ENCODE measurements at regions of chr2 and their contacts with region 1.

Region 1: GRCh38 chr2:19347619-19348562 is 10.5 kb downstream of the OSR1 start:
- DNase-seq: peak; percentile 96
- H3K4me3 Mint-ChIP-seq: peak overlapping the region; percentile 91
- H3K27ac Mint-ChIP-seq: peak overlapping the region; percentile 91
- H3K4me1 Mint-ChIP-seq: peaks cover 21% of the 10 kb centered on the region
- H3K27me3 Mint-ChIP-seq: peaks cover 38% of the 10 kb centered on the region

Region 2: GRCh38 chr2:17753803-17754663 is 1593.9 kb before region 1 on chr2 and contains the starts of genes GEN1 and SMC6:
- CTCF ChIA-PET with region 1: no interaction called
- POLR2A ChIA-PET with region 1: no interaction called
- intact Hi-C with region 1: loop called (anchors 10 kb)
- DNase-seq: peak; percentile 94
- H3K4me3 Mint-ChIP-seq: peak within 1 kb of the TSS; percentile 83
- H3K27ac Mint-ChIP-seq: peak within 1 kb of the TSS; percentile 97
- H3K4me1 Mint-ChIP-seq: peaks cover 27% of the 10 kb centered on the region
- H3K27me3 Mint-ChIP-seq: no peaks in the 10 kb centered on the region
- total RNA-seq, gene GEN1: 24.0 to 30.9 TPM
- total RNA-seq, gene SMC6: 21.4 to 22.7 TPM

Region 3: DNA sequence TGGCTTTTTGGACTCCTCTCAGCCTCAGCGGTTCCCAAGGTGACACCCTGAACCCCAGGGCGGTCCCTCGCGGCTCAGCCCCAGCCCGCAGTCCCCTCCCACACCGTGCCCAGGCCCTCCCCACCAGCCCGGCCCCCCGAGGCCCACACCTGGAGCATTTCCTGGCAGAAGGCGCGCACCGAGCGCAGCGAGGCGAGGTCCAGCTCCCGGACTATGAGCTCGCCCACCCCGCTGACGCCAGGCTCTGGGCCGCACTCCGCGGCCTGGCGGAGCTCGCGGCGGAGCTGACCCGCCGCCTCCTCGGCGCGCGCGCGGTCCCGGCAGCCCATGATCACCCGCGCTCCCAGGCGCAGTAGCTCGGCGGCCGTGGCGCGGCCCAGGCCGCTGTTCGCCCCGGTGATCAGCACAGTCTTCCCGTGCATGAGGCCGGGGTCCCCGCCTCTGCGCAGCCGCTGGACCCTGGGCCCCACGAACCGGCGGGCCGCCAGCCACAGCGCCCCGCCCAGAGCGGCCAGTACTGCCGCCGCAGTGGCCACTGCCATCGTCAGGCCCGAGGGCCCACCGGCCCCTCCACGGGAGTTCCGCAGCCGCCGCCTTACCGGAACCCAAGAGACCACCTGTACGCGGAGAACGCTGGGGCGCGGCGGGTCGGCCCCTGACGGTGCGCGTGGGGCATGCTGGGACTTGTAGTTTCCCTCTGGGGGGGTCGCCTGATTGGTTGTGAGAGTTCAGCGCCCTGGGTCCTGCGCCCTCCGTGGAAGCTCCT is 787.7 kb before region 1 on chr2 and contains the start of gene RDH14:
- CTCF ChIA-PET with region 1: no interaction called
- POLR2A ChIA-PET with region 1: interaction called, 9 read pairs
- intact Hi-C with region 1: loop called (anchors 1 kb)
- DNase-seq: peak; percentile 94
- H3K4me3 Mint-ChIP-seq: peak within 1 kb of the TSS; percentile 90
- H3K27ac Mint-ChIP-seq: peak within 1 kb of the TSS; percentile 89
- H3K4me1 Mint-ChIP-seq: peaks cover 33% of the 10 kb centered on the region
- H3K27me3 Mint-ChIP-seq: no peaks in the 10 kb centered on the region
- total RNA-seq, gene RDH14: 14.1 to 14.4 TPM

Region 4: DNA sequence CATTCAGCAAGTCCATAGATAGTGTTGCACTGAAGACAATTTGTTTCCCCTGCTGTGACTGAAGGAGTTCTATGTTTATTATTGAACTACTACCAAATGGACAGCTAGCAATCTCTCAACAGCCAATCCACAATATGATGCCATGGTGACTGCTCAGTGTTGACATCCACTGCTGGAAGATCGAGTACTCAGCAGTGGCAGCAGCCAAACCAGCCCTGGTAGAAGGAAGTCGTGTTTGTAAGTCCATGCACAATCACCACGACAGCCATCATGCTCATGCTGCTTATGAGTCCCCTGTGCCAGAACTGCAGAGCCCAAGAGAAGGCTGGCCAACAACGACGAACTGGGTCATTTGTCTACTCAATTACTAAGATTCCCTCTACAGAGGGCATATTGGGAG is 55.9 kb before region 1 on chr2:
- CTCF ChIA-PET with region 1: no interaction called
- POLR2A ChIA-PET with region 1: no interaction called
- intact Hi-C with region 1: no loop called
- DNase-seq: no peak
- H3K4me3 Mint-ChIP-seq: no peak overlapping the region
- H3K27ac Mint-ChIP-seq: no peak overlapping the region
- H3K4me1 Mint-ChIP-seq: peaks cover 6% of the 10 kb centered on the region
- H3K27me3 Mint-ChIP-seq: no peaks in the 10 kb centered on the region

Region 5: GRCh38 chr2:19362755-19363473 is 15.0 kb after region 1 on chr2:
- CTCF ChIA-PET with region 1: interaction called, 43 read pairs
- POLR2A ChIA-PET with region 1: interaction called, 11 read pairs
- intact Hi-C with region 1: loop called (anchors 1 kb)
- DNase-seq: peak; percentile 70
- H3K4me3 Mint-ChIP-seq: peak overlapping the region; percentile 83
- H3K27ac Mint-ChIP-seq: no peak overlapping the region
- H3K4me1 Mint-ChIP-seq: peaks cover 24% of the 10 kb centered on the region
- H3K27me3 Mint-ChIP-seq: peaks cover 51% of the 10 kb centered on the region

Region 6: DNA sequence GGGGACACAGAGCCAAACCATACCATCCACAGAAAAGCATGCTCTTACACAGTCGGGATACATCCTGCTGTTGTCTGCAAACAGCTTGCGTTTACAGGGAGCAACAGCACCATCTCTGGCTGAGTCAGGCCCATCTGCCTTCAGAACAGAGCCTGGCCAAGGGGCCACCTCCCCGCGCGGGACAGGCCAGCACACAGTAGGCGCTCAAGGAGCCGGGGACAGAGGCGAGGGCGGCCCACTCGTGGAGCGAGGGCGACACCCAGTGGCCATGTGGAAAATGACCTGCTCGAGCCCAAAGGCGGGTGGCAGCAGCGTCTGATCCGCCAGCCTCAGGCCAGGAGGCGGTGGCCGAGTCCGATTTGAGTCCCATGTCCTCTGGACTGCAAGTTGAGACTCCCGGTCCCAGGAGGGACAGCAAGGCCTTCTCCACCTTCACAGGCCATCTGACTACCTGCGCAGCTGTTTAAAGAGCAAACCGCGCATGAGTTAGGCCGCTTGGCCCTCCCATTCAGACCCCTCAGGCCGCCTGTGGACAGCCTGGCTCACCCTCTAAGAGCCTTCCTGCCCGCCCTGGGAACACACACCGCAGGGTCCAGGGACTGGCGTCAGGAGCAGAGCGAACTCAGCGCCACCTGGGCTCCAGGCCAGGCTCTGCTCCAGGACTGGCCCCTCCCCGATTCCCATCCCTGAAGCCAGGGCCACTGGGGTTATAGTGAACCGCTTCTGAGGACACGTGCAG is 515.6 kb after region 1 on chr2:
- CTCF ChIA-PET with region 1: interaction called, 4 read pairs
- POLR2A ChIA-PET with region 1: no interaction called
- intact Hi-C with region 1: loop called (anchors 1 kb)
- DNase-seq: peak; percentile 76
- H3K4me3 Mint-ChIP-seq: no peak overlapping the region
- H3K27ac Mint-ChIP-seq: no peak overlapping the region
- H3K4me1 Mint-ChIP-seq: peaks cover 5% of the 10 kb centered on the region
- H3K27me3 Mint-ChIP-seq: peaks cover 1% of the 10 kb centered on the region

Region 7: GRCh38 chr2:19901442-19902215 is 553.7 kb after region 1 on chr2 and contains the start of gene TTC32:
- CTCF ChIA-PET with region 1: no interaction called
- POLR2A ChIA-PET with region 1: no interaction called
- intact Hi-C with region 1: loop called (anchors 1 kb)
- DNase-seq: peak; percentile 95
- H3K4me3 Mint-ChIP-seq: peak within 1 kb of the TSS; percentile 83
- H3K27ac Mint-ChIP-seq: peak within 1 kb of the TSS; percentile 93
- H3K4me1 Mint-ChIP-seq: peaks cover 38% of the 10 kb centered on the region
- H3K27me3 Mint-ChIP-seq: peaks cover 2% of the 10 kb centered on the region
- total RNA-seq, gene TTC32: 14.2 to 17.3 TPM

Region 8: GRCh38 chr2:20051532-20052228 is 703.8 kb after region 1 on chr2 and contains the start of gene LAPTM4A:
- CTCF ChIA-PET with region 1: no interaction called
- POLR2A ChIA-PET with region 1: no interaction called
- intact Hi-C with region 1: loop called (anchors 1 kb)
- DNase-seq: peak; percentile 99
- H3K4me3 Mint-ChIP-seq: no peak within 1 kb of the TSS
- H3K27ac Mint-ChIP-seq: no peak within 1 kb of the TSS
- H3K4me1 Mint-ChIP-seq: peaks cover 28% of the 10 kb centered on the region
- H3K27me3 Mint-ChIP-seq: peaks cover 11% of the 10 kb centered on the region
- total RNA-seq, gene LAPTM4A: 26.7 to 29.0 TPM